Naive thymus-derived CD4-positive, alpha-beta T cell (primary cell): ENCODE measurements at regions of chr22 and their contacts with region 1.

Region 1: GRCh38 chr22:42581762-42582716 is 28.3 kb downstream of the SERHL2 start:
- DNase-seq: peak; percentile 69 to 88 (median 80)
- ATAC-seq: peak; percentile 95
- H3K4me3 ChIP-seq: peak overlapping the region; percentile 75
- H3K4me3 Mint-ChIP-seq: peak overlapping the region; percentile 83 to 99 (median 93)
- H3K27ac ChIP-seq: peak overlapping the region; percentile 78
- H3K27ac Mint-ChIP-seq: peak overlapping the region; percentile 76 to 95 (median 87)
- H3K4me1 ChIP-seq: peaks cover 5 to 10% of the 10 kb centered on the region in 2 donors
- H3K4me1 Mint-ChIP-seq: peaks cover 11 to 16% (median 14%) of the 10 kb centered on the region in 7 donors
- H3K27me3 ChIP-seq: no peaks in the 10 kb centered on the region
- H3K27me3 Mint-ChIP-seq: no peaks in the 10 kb centered on the region

Region 2: GRCh38 chr22:42596336-42596735 is 14.3 kb after region 1 on chr22:
- CTCF ChIA-PET with region 1: interaction called, 10 read pairs
- POLR2A ChIA-PET with region 1: interaction called, 3 read pairs
- intact Hi-C with region 1: no loop called
- DNase-seq: no peak
- ATAC-seq: no peak
- H3K4me3 ChIP-seq: no peak overlapping the region
- H3K4me3 Mint-ChIP-seq: no peak overlapping the region
- H3K27ac ChIP-seq: no peak overlapping the region
- H3K27ac Mint-ChIP-seq: no peak overlapping the region
- H3K4me1 ChIP-seq: no peaks in the 10 kb centered on the region
- H3K4me1 Mint-ChIP-seq: peaks cover 0 to 7% (median 3%) of the 10 kb centered on the region in 7 donors
- H3K27me3 ChIP-seq: no peaks in the 10 kb centered on the region
- H3K27me3 Mint-ChIP-seq: no peaks in the 10 kb centered on the region

Region 3: DNA sequence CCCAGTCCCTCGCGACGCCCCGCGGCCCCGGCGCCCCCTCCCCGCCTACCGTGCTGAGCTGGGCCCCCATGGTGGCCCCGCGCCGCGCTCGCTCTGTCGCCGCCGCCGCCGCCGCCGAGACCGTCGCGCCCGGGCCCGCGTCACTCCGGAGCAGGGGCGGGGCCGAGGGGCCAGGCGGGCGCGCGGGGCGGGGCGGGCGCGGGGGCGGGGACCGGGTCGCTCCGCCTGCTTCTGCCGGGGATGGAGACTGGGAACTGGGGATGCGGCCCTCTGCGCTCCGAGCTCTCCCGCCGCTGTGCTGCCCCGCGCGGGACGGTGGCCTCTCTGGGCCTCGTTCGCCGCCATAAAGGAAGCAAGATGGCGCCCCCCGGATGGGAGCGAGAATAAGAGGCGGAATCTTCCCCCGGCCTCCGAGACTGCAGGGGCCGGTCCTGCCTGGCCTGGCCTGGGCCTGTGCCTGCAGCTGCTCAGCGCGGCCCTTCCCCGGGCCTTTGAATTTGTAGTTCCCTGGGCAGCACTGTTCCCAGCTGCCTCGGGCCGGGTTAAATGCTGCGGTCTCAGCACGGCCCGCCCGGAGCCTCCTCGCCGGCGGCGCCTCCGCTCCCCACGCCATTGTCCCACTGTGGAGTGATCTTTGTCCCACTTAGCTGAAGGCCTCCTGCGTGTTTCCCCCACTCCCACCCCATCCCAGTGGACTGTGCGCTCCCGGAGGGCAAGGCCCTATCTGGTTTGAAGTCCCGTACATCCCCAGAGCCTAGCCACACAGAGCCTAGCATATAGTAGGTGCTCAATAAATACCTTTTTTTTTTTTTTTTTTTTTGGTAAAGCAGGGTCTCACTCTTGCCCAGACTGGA is 67.4 kb after region 1 on chr22 and contains the start of gene CYB5R3:
- CTCF ChIA-PET with region 1: no interaction called
- POLR2A ChIA-PET with region 1: no interaction called
- intact Hi-C with region 1: loop called in 1 of 2 experiments (anchors 2 kb)
- DNase-seq: peak; percentile 59 to 84 (median 76)
- ATAC-seq: peak; percentile 89
- H3K4me3 ChIP-seq: peak within 1 kb of the TSS; percentile 77
- H3K4me3 Mint-ChIP-seq: peak within 1 kb of the TSS; percentile 91 to 100 (median 98)
- H3K27ac ChIP-seq: peak within 1 kb of the TSS; percentile 84
- H3K27ac Mint-ChIP-seq: peak within 1 kb of the TSS; percentile 91 to 100 (median 98)
- H3K4me1 ChIP-seq: peaks cover 11 to 16% of the 10 kb centered on the region in 2 donors
- H3K4me1 Mint-ChIP-seq: peaks cover 7 to 38% (median 28%) of the 10 kb centered on the region in 7 donors
- H3K27me3 ChIP-seq: no peaks in the 10 kb centered on the region
- H3K27me3 Mint-ChIP-seq: peaks cover 0 to 2% (median 0%) of the 10 kb centered on the region in 5 donors
- total RNA-seq, gene CYB5R3: 34.3 to 70.6 (median 42.3) TPM